ENCODE measurements at regions of chr7 and their contacts with region 1.

Region 1: GRCh38 chr7:133753513-133753912 is 373.6 kb upstream of the LRGUK start:
- DNase-seq: peak; percentile 74
- ATAC-seq: peak; percentile 91
- H3K4me3 ChIP-seq: no peak overlapping the region
- H3K27ac ChIP-seq: peak overlapping the region; percentile 45
- H3K4me1 ChIP-seq: peaks cover 20% of the 10 kb centered on the region
- H3K27me3 ChIP-seq: no peaks in the 10 kb centered on the region
- CTCF ChIP-seq: no peak

Region 2: DNA sequence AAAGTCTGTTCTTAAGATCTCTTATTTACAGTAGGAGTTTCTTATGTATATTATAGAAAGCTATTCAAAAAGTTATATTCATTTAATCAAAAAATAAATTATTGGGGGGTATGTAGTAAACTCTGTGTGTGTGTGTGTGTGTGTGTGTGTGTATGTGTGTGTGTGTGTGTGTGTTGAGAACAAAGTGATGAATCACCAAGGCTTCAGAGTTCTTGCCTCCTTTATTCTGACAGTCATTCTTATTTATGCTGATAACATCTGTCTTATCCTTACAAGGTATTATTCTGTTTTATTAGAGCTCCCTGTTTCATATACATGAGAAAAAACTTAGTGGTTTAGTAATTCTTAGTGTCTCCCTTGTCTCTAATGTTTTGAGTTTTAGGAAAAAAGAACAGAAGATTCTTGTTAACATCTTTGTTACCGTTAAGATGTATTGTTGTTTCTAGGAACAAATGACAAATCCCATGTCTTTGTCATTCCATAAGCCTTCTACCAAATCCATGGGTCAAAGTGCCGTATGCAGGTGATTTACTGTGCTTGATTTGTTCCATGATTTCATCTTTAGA is 76.6 kb before region 1 on chr7:
- CTCF ChIA-PET with region 1: no interaction called
- POLR2A ChIA-PET with region 1: no interaction called
- intact Hi-C with region 1: no loop called
- DNase-seq: no peak
- ATAC-seq: no peak
- H3K4me3 ChIP-seq: no peak overlapping the region
- H3K27ac ChIP-seq: no peak overlapping the region
- H3K4me1 ChIP-seq: no peaks in the 10 kb centered on the region
- H3K27me3 ChIP-seq: no peaks in the 10 kb centered on the region
- CTCF ChIP-seq: no peak

Region 3: GRCh38 chr7:133691727-133692610 is 61.5 kb before region 1 on chr7:
- CTCF ChIA-PET with region 1: no interaction called
- POLR2A ChIA-PET with region 1: no interaction called
- intact Hi-C with region 1: no loop called
- DNase-seq: no peak
- ATAC-seq: no peak
- H3K4me3 ChIP-seq: no peak overlapping the region
- H3K27ac ChIP-seq: no peak overlapping the region
- H3K4me1 ChIP-seq: 0 out of 2 replicates have a peak, but pooled peaks cover 5% of the 10 kb centered on the region
- H3K27me3 ChIP-seq: no peaks in the 10 kb centered on the region
- CTCF ChIP-seq: no peak

Region 4: DNA sequence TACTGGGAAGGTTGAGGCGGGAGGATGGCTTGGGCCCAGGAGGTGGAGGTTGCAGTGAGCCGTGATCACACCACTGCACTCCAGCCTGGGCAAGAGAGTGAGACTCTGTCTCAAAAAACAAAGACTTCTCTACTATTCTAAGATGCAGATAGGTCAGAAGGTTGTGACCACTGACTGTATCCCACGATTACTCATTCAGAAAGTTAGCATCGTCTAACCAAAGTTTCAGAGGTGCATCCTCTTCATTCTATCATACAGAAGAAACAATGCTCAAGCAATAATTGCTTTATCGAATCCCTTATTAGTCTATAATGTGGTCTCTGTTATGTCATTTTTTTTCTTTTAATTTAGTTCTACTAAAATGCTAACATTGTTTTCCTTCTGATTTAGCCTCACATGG is 25.0 kb after region 1 on chr7:
- CTCF ChIA-PET with region 1: no interaction called
- POLR2A ChIA-PET with region 1: interaction called, 16 read pairs
- intact Hi-C with region 1: no loop called
- DNase-seq: no peak
- ATAC-seq: no peak
- H3K4me3 ChIP-seq: no peak overlapping the region
- H3K27ac ChIP-seq: no peak overlapping the region
- H3K4me1 ChIP-seq: peaks cover 1% of the 10 kb centered on the region
- H3K27me3 ChIP-seq: no peaks in the 10 kb centered on the region
- CTCF ChIP-seq: no peak

Region 5: GRCh38 chr7:133992153-133992552 is 238.6 kb after region 1 on chr7:
- CTCF ChIA-PET with region 1: no interaction called
- POLR2A ChIA-PET with region 1: no interaction called
- intact Hi-C with region 1: loop called (anchors 5 kb)
- DNase-seq: no peak
- ATAC-seq: no peak
- H3K4me3 ChIP-seq: no peak overlapping the region
- H3K27ac ChIP-seq: no peak overlapping the region
- H3K4me1 ChIP-seq: no peaks in the 10 kb centered on the region
- H3K27me3 ChIP-seq: no peaks in the 10 kb centered on the region
- CTCF ChIP-seq: no peak

Measured in PC-3 (cell line).